B cell (primary cell): ENCODE measurements at regions of chr7 and their contacts with region 1.

Region 1: DNA sequence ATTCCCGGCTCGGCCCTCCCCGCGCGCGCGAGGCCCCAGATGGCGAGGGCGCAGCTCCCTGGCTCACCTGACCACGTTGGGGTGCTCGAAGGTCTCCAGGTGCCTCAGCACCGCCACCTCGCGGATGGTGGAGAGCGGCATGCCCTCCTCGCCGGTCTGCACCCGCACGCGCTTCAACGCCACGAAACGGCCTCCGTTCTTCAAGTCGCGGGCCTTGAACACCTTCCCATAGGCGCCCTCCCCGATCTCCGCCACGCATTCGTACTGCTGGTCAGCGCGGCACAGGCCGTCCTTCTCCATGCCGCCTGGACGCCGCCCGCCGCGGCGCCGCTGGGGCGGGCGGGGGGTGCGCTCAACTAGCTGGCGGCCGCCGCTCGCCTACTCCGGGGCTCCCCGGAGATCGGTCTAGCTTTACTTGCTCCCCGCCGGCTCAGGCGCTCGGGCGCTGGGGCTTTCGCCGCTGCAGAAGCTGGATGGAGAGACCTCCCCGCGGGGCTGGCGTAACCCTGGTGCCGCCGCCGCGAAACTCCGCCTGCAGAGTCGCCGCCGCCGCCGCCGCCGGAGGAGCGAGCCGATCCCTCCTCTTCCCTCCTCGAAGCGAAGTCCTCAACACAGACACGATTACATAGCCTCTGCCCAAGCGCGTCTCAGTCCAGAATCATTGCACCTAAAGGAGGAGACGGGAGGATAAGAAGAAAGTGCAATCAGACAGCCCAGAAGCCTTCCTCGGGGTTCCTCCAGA is 3.2 kb downstream of the CDK6 start:
- DNase-seq: peak; percentile 92
- ATAC-seq: peak; percentile 72
- H3K4me3 ChIP-seq: peak overlapping the region; percentile 88 to 96 (median 90)
- H3K4me3 Mint-ChIP-seq: peak overlapping the region; percentile 89
- H3K27ac ChIP-seq: peak overlapping the region; percentile 18 to 47
- H3K27ac Mint-ChIP-seq: peak overlapping the region; percentile 93
- H3K4me1 ChIP-seq: peaks cover 27 to 29% of the 10 kb centered on the region in 2 donors
- H3K4me1 Mint-ChIP-seq: peaks cover 40% of the 10 kb centered on the region
- H3K27me3 ChIP-seq: no peaks in the 10 kb centered on the region
- H3K27me3 Mint-ChIP-seq: no peaks in the 10 kb centered on the region
- CTCF ChIP-seq: peak; percentile 88

Region 2: GRCh38 chr7:91880413-91881241 is 952.6 kb before region 1 on chr7 and contains the start of gene MTERF1:
- CTCF ChIA-PET with region 1: no interaction called
- POLR2A ChIA-PET with region 1: no interaction called
- intact Hi-C with region 1: loop called (anchors 5 kb)
- DNase-seq: peak; percentile 95
- ATAC-seq: peak; percentile 96
- H3K4me3 ChIP-seq: peak within 1 kb of the TSS; percentile 82 to 97 (median 85)
- H3K4me3 Mint-ChIP-seq: peak within 1 kb of the TSS; percentile 95
- H3K27ac ChIP-seq: peak within 1 kb of the TSS; percentile 65 to 72
- H3K27ac Mint-ChIP-seq: peak within 1 kb of the TSS; percentile 87
- H3K4me1 ChIP-seq: peaks cover 10 to 12% of the 10 kb centered on the region in 2 donors
- H3K4me1 Mint-ChIP-seq: peaks cover 30% of the 10 kb centered on the region
- H3K27me3 ChIP-seq: no peaks in the 10 kb centered on the region
- H3K27me3 Mint-ChIP-seq: peaks cover 2% of the 10 kb centered on the region
- CTCF ChIP-seq: peak; percentile 88
- total RNA-seq, gene MTERF1: 33.7 and 34.4 TPM in 2 replicates

Region 3: GRCh38 chr7:92245487-92246362 is 587.5 kb before region 1 on chr7 and contains the starts of genes ANKIB1 and KRIT1:
- CTCF ChIA-PET with region 1: no interaction called
- POLR2A ChIA-PET with region 1: no interaction called
- intact Hi-C with region 1: loop called (anchors 5 kb)
- DNase-seq: peak; percentile 92
- ATAC-seq: peak; percentile 78
- H3K4me3 ChIP-seq: peak within 1 kb of the TSS; percentile 55 to 83 (median 81)
- H3K4me3 Mint-ChIP-seq: peak within 1 kb of the TSS; percentile 99
- H3K27ac ChIP-seq: peak within 1 kb of the TSS; percentile 84 to 97
- H3K27ac Mint-ChIP-seq: peak within 1 kb of the TSS; percentile 99
- H3K4me1 ChIP-seq: peaks cover 15 to 31% of the 10 kb centered on the region in 2 donors
- H3K4me1 Mint-ChIP-seq: peaks cover 39% of the 10 kb centered on the region
- H3K27me3 ChIP-seq: no peaks in the 10 kb centered on the region
- H3K27me3 Mint-ChIP-seq: no peaks in the 10 kb centered on the region
- CTCF ChIP-seq: peak; percentile 20
- total RNA-seq, gene ANKIB1: 76.7 and 77.5 TPM in 2 replicates
- total RNA-seq, gene KRIT1: 78.1 and 85.1 TPM in 2 replicates

Region 4: DNA sequence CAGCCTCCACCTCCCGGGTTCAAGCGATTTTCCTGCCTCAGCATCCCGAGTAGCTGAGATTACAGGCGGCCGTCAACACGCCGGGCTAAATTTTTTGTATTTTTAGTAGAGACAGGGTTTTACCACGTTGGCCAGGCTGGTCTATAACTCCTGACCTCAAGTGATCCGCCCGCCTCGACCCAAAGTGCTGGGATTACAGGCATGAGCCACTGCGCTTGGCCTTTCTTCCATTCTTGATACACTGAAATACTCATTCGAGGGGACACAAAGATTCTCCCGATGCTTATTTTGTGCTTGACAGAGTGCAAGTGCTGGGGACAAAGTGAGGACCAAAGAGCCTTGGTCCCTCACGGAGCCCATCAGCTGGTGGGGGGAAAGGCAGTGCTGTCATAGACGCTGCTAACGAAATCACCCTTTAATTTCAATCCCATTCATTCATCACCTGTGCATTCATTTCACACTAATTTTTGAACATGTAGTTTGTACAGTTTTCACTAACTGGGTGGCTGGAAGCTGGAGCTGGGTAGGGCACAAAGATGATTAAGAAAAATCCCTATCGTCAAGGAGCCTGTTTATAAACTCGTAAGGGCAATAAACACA is 242.4 kb before region 1 on chr7:
- CTCF ChIA-PET with region 1: interaction called, 3 read pairs
- POLR2A ChIA-PET with region 1: no interaction called
- intact Hi-C with region 1: loop called (anchors 1 kb)
- DNase-seq: no peak
- ATAC-seq: no peak
- H3K4me3 ChIP-seq: peak overlapping the region in 4 of 5 experiments; percentile 84 to 88 (median 86)
- H3K4me3 Mint-ChIP-seq: peak overlapping the region; percentile 94
- H3K27ac ChIP-seq: no peak overlapping the region
- H3K27ac Mint-ChIP-seq: peak overlapping the region; percentile 11
- H3K4me1 ChIP-seq: peaks cover 22 to 25% of the 10 kb centered on the region in 2 donors
- H3K4me1 Mint-ChIP-seq: peaks cover 41% of the 10 kb centered on the region
- H3K27me3 ChIP-seq: no peaks in the 10 kb centered on the region
- H3K27me3 Mint-ChIP-seq: no peaks in the 10 kb centered on the region
- CTCF ChIP-seq: no peak

Region 5: GRCh38 chr7:92717993-92718716 is 115.0 kb before region 1 on chr7:
- CTCF ChIA-PET with region 1: interaction called, 3 read pairs
- POLR2A ChIA-PET with region 1: no interaction called
- intact Hi-C with region 1: loop called (anchors 1 kb)
- DNase-seq: peak; percentile 66
- ATAC-seq: peak; percentile 93
- H3K4me3 ChIP-seq: peak overlapping the region; percentile 36 to 67 (median 54)
- H3K4me3 Mint-ChIP-seq: peak overlapping the region; percentile 94
- H3K27ac ChIP-seq: peak overlapping the region; percentile 36 to 66
- H3K27ac Mint-ChIP-seq: peak overlapping the region; percentile 92
- H3K4me1 ChIP-seq: peaks cover 13 to 16% of the 10 kb centered on the region in 2 donors
- H3K4me1 Mint-ChIP-seq: peaks cover 26% of the 10 kb centered on the region
- H3K27me3 ChIP-seq: no peaks in the 10 kb centered on the region
- H3K27me3 Mint-ChIP-seq: no peaks in the 10 kb centered on the region
- CTCF ChIP-seq: no peak

Region 6: GRCh38 chr7:92823042-92823441 is 10.2 kb before region 1 on chr7:
- CTCF ChIA-PET with region 1: interaction called, 16 read pairs
- POLR2A ChIA-PET with region 1: no interaction called
- intact Hi-C with region 1: no loop called
- DNase-seq: no peak
- ATAC-seq: no peak
- H3K4me3 ChIP-seq: no peak overlapping the region
- H3K4me3 Mint-ChIP-seq: no peak overlapping the region
- H3K27ac ChIP-seq: no peak overlapping the region
- H3K27ac Mint-ChIP-seq: no peak overlapping the region
- H3K4me1 ChIP-seq: no peaks in the 10 kb centered on the region
- H3K4me1 Mint-ChIP-seq: peaks cover 16% of the 10 kb centered on the region
- H3K27me3 ChIP-seq: no peaks in the 10 kb centered on the region
- H3K27me3 Mint-ChIP-seq: no peaks in the 10 kb centered on the region
- CTCF ChIP-seq: no peak

Region 7: DNA sequence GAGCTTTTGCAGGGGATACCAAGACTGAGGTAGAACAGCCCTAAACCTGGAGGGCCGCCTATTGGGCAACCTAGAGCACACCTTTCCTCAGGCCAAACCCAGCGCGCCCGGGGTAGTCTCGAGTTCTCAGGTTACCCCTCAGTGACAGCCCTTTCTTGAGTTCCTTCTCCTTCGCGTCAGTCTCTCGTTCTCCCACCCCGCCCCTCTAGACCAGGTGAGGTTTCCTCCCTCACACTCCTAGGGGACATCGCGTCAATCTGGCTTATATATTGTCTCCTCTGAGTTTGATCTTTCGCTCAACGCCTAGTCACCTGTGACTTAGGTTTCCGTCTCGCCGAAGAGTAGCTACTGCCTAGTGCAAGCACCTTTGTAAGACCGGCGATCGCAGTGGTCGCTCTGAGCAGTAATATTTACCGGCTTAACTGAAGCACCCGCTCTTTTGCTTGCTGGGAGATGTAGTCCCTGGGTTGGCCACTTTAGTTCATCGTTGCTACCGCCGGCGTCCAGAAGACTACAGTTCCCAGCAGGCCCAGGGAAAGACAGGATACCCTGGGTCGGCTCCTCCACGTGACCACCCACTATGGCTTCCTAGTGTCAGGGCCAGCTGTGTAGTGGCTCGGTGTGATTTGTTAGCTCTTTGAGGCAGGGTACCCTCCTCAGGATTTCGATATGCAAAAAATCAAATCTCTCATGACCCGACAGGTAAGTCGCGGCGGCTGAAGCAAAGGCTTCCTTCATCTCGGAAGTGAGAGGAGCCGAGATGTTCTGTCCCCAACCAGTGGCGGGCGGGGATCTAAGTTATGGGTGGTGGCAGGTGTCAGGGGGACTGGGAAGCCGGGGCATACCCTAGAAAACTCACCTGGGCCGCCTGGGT is 398.8 kb after region 1 on chr7 and contains the start of gene VPS50:
- CTCF ChIA-PET with region 1: interaction called, 4 read pairs
- POLR2A ChIA-PET with region 1: no interaction called
- intact Hi-C with region 1: loop called (anchors 1 kb)
- DNase-seq: peak; percentile 97
- ATAC-seq: peak; percentile 98
- H3K4me3 ChIP-seq: peak within 1 kb of the TSS; percentile 75 to 98 (median 90)
- H3K4me3 Mint-ChIP-seq: peak within 1 kb of the TSS; percentile 95
- H3K27ac ChIP-seq: peak within 1 kb of the TSS; percentile 81 to 90
- H3K27ac Mint-ChIP-seq: peak within 1 kb of the TSS; percentile 94
- H3K4me1 ChIP-seq: peaks cover 14 to 15% of the 10 kb centered on the region in 2 donors
- H3K4me1 Mint-ChIP-seq: peaks cover 25% of the 10 kb centered on the region
- H3K27me3 ChIP-seq: no peaks in the 10 kb centered on the region
- H3K27me3 Mint-ChIP-seq: no peaks in the 10 kb centered on the region
- CTCF ChIP-seq: no peak
- total RNA-seq, gene VPS50: 54.1 and 55.4 TPM in 2 replicates

Region 8: DNA sequence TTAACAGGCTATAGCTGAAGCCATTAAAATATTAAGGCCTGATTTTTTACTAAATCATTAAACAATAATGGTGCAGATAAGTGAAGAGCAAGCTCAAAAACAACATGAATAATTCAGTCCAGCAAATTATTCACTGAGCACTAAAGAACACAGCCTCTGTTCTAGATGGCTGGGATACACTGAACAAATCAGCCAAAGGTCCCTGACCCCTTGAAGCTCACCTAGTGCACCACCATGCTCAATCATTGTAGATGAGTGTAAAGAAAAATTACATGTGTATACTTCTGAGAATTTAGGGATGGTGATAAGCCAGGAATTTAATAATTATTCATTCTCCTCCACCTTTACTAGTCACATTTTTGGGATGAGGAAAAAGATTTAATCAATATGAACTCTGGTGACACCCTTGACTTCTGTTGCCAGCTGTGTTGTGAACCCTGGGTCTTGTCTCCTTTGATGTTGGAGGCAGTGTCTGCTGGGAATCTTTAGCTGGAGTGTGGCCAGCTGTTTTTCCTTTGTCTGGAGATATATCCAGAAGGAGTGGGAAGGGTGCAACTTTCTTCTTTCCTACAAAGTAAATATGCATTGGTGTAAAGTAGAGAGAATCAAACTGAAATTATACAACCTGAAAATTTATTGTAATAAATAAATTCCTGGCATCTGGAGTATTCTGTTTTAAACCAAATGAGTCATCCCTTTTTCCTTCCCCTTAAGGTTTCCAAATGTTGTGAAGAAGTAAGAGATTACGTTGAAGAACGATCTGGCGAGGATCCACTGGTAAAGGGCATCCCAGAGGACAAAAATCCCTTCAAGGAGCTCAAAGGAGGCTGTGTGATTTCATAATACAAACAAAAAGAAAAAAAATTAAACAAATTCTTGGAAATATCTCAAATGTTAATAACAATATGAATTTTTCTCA is 1077.1 kb after region 1 on chr7:
- CTCF ChIA-PET with region 1: no interaction called
- POLR2A ChIA-PET with region 1: no interaction called
- intact Hi-C with region 1: no loop called
- DNase-seq: no peak
- ATAC-seq: no peak
- H3K4me3 ChIP-seq: no peak overlapping the region
- H3K4me3 Mint-ChIP-seq: no peak overlapping the region
- H3K27ac ChIP-seq: no peak overlapping the region
- H3K27ac Mint-ChIP-seq: no peak overlapping the region
- H3K4me1 ChIP-seq: no peaks in the 10 kb centered on the region
- H3K4me1 Mint-ChIP-seq: peaks cover 2% of the 10 kb centered on the region
- H3K27me3 ChIP-seq: no peaks in the 10 kb centered on the region
- H3K27me3 Mint-ChIP-seq: no peaks in the 10 kb centered on the region
- CTCF ChIP-seq: no peak